Activated CD8-positive, alpha-beta memory T cell treated with anti-CD3 and anti-CD28 coated beads, Interleukin-2, amount 10 ng/mL, durations not matched to agents 7 days and 5 days (primary cell): ENCODE measurements at regions of chr12 and their contacts with region 1.

Region 1: GRCh38 chr12:68119724-68120211 is 39.8 kb downstream of the IFNG start:
- DNase-seq: peak; percentile 92
- ATAC-seq: peak; percentile 86
- H3K4me3 Mint-ChIP-seq: peak overlapping the region; percentile 54
- H3K27ac Mint-ChIP-seq: no peak overlapping the region
- H3K4me1 Mint-ChIP-seq: peaks cover 35% of the 10 kb centered on the region
- H3K27me3 Mint-ChIP-seq: no peaks in the 10 kb centered on the region

Region 2: DNA sequence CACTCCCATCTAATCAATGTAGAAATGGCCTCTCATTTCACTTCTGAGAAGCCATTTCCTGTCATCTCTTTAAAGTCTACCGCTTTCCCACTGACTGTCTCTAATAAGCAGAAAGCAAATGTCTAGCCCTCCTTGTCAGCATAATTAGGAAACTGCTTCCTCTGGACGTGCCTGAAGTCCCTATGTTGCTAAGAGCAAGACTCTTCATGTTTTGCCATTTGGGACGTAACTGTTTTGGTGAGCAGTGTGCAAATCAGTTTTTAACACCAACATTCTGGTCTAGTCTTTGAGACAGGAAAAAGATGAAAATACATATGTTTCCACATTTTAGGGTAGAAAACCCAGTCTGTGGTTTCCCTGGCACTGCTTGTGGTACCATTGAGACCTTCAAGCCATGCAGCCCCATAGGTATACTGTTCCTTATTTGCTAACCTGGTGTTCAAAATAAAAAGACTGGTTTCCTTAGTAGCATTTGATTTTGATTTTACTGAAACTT is 17.6 kb after region 1 on chr12:
- CTCF ChIA-PET with region 1: interaction called, 19 read pairs
- DNase-seq: no peak
- ATAC-seq: peak; percentile 62
- H3K4me3 Mint-ChIP-seq: peak overlapping the region; percentile 20
- H3K27ac Mint-ChIP-seq: peak overlapping the region; percentile 86
- H3K4me1 Mint-ChIP-seq: peaks cover 49% of the 10 kb centered on the region
- H3K27me3 Mint-ChIP-seq: no peaks in the 10 kb centered on the region